ENCODE measurements at regions of chr1 and their contacts with region 1.

Region 1: DNA sequence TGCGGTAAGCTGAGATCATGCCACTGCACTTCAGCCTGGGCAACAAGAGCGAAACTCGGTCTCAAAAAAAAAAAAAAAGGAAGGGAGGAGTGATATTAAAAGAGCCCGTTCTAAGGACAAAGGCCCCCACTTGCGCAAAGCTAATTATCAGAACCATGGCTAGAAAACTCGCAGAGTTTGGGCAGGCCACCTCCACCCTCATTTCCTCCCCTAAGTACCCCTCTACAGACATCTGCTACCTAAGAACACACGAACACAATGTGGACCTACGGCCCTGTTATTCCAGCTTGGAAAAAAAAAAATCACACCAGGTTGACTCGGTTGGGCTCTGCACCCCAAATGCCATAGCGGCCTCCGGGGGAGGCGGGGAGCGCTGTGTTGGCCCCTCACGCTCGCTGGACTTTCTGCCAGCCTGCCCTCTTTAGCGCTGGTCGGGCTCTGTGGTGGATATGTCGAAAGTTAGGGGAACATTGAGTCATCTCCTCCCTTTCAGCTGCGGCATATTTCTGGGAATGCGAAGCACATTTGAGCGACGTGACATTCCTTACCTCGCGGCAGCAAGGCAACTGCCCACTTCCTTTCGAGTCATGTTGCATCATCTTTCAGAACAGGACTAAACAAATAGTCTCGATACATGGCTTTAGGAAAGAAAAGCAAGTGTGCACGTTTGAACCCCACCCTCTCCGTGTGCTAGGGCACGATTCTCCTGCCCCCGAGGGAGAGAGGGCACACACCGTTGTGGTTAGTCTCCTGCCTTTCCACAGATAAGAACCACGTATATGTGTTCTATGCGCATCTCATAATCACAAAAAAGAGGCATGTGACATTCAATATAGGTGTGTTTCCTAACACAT is 106.1 kb upstream of the SLC45A1 start:
- DNase-seq: peak; percentile 98
- ATAC-seq: peak; percentile 83
- H3K4me3 ChIP-seq: peak overlapping the region; percentile 22; the same call in 1 of the 2 replicates
- H3K27ac ChIP-seq: peak overlapping the region; percentile 98
- H3K4me1 ChIP-seq: peaks cover 33% of the 10 kb centered on the region
- H3K27me3 ChIP-seq: no peaks in the 10 kb centered on the region
- CTCF ChIP-seq: no peak

Region 2: GRCh38 chr1:8121261-8122170 is 90.3 kb before region 1 on chr1:
- CTCF ChIA-PET with region 1: no interaction called
- POLR2A ChIA-PET with region 1: no interaction called
- intact Hi-C with region 1: no loop called
- DNase-seq: peak; percentile 45
- ATAC-seq: no peak
- H3K4me3 ChIP-seq: no peak overlapping the region
- H3K27ac ChIP-seq: peak overlapping the region; percentile 54
- H3K4me1 ChIP-seq: peaks cover 14% of the 10 kb centered on the region
- H3K27me3 ChIP-seq: no peaks in the 10 kb centered on the region
- CTCF ChIP-seq: no peak

Region 3: DNA sequence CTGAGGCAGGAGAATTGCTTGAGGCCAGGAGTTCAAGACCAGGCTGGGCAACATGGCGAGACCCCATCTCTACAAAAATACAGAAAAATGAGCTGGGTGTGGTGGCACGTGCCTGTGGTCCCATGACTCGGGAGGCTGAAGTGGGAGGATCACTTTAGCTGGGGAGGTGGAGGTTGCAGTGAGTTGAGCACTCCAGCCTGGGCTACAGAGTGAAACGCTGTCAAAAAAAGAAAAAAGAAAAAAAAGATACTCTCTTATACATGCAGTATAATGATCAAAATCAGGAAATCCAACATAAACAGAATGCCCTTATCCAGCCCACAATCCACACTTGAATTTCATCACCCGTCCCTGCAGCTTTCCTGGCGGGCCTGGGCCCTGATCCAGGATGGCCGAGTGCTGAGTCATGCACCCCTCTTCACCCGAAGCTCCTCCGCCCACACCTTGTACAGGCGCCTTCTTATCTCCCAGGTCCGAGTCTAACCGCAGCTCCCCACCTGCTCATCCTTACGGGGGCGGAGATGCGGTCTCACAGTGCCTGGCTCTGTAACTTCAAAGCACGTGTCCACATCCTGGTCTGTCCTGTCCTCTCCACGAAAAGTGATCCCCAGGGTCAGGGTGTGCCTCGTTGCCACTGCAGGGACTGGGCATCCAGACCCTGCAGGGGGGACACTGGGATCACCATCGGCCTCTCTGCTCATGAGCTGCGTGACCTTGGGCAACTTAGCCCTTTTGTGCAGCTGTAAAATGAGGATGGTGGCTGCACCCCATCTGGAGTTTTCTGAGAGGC is 14.1 kb before region 1 on chr1:
- CTCF ChIA-PET with region 1: no interaction called
- POLR2A ChIA-PET with region 1: interaction called, 5 read pairs
- intact Hi-C with region 1: loop called (anchors 2 kb)
- DNase-seq: peak; percentile 96
- ATAC-seq: peak; percentile 63
- H3K4me3 ChIP-seq: no peak overlapping the region
- H3K27ac ChIP-seq: peak overlapping the region; percentile 98
- H3K4me1 ChIP-seq: peaks cover 61% of the 10 kb centered on the region
- H3K27me3 ChIP-seq: no peaks in the 10 kb centered on the region
- CTCF ChIP-seq: no peak

Region 4: DNA sequence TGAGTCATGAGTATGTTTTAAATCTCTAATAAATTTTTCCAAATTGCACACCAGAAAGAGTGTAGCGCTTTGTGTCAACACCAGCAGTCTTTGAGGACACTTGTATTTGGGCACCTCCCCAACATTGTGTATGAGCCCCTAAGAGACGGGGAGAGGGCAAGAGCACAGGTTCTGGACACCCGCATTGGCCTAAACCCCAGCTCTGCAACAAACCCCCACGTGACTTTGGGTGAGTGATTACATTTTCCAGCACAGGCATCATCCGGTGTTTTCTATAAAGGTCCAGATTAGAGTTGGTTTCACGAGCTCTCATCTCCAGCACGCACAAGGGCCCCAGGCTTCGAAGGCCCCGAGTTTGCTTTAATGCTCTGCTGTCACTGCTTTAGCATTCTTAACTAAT is 39.8 kb after region 1 on chr1:
- CTCF ChIA-PET with region 1: no interaction called
- POLR2A ChIA-PET with region 1: no interaction called
- intact Hi-C with region 1: no loop called
- DNase-seq: no peak
- ATAC-seq: no peak
- H3K4me3 ChIP-seq: no peak overlapping the region
- H3K27ac ChIP-seq: no peak overlapping the region
- H3K4me1 ChIP-seq: no peaks in the 10 kb centered on the region
- H3K27me3 ChIP-seq: no peaks in the 10 kb centered on the region
- CTCF ChIP-seq: no peak

Region 5: DNA sequence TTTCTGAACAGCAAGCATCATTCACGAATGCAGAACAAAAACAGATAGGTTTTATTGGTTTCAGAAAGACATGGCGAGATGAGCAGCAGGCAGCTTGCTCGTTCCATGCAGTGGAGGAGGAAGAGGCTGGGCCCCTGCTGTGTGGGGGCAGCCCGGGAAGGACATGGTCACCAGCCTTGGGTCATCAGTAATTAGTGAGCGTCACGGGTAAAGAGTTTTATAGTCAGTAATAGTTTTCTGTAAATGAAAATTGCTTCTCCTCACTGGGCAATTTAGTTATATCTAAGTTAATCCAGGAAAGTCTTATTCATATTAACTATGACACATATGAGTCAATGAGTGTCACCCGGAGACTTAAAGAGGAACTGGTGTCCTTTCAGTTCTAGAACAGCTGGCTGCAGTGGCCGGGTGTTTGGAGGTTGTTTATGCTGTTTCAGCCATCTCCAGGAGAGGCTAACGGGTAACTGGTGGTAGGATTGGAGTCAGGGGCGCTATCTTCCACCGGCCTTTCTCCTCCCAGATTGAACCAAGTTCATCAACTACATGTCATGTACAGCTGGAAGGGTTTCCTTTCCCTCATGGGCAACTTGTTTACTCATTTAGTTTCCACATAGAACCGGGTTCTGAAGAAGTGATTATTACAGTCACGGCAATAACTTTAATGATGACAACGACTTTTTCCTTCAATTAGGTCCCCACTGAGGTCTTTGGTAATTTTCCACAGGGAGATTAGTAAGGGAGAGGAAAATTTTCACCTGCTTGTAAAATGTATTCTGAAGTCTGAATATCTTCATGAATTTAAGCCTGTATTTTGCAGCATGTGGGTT is 71.5 kb after region 1 on chr1:
- CTCF ChIA-PET with region 1: no interaction called
- POLR2A ChIA-PET with region 1: no interaction called
- intact Hi-C with region 1: no loop called
- DNase-seq: peak; percentile 38
- ATAC-seq: peak; percentile 60
- H3K4me3 ChIP-seq: no peak overlapping the region
- H3K27ac ChIP-seq: peak overlapping the region; percentile 40; the same call in 1 of the 2 replicates
- H3K4me1 ChIP-seq: peaks cover 27% of the 10 kb centered on the region
- H3K27me3 ChIP-seq: no peaks in the 10 kb centered on the region
- CTCF ChIP-seq: no peak

Region 6: DNA sequence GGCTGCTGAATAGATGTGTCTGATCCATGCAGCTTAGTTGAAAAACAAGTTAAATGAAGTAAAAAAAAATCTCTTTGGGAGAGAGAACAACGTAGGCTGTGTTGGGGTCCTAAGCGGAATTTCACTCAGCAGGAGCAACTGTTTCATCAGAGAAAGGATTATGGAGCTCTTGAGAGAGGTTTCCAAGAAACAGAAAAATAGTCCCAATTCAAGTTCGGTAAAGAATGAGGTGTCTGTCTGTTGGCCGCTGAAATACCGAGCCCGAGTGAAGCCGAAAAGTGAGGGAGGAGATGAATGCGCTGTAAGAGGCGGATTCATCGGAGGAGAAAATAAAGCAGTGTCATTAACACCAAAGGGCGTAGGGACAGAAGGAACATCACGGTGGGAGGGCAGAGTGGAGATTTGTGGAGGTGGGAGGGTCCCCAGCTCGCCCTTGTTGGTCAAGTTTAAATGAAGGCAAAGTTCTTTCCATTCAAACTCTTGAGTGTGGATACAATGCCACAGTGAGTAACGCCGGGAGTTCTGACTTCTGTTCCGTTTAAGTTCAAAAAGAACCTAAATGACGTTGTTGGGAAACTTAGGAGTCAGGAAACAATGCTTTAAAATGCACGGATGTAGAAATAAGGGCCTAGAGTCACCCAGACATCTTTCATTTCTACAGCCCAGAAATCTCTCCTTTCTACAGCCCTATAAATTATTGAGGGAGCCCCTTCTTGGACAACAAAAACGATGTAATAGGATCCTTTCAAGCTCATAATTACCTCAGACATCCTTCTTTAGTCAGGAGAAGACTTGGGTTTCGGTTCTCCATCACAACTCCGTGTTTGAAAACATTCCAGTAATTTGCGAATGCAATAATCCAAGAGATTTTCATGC is 90.5 kb after region 1 on chr1:
- CTCF ChIA-PET with region 1: no interaction called
- POLR2A ChIA-PET with region 1: no interaction called
- intact Hi-C with region 1: no loop called
- DNase-seq: no peak
- ATAC-seq: no peak
- H3K4me3 ChIP-seq: no peak overlapping the region
- H3K27ac ChIP-seq: no peak overlapping the region
- H3K4me1 ChIP-seq: no peaks in the 10 kb centered on the region
- H3K27me3 ChIP-seq: no peaks in the 10 kb centered on the region
- CTCF ChIP-seq: no peak

Region 7: GRCh38 chr1:8314346-8315280 is 102.8 kb after region 1 on chr1:
- CTCF ChIA-PET with region 1: no interaction called
- POLR2A ChIA-PET with region 1: no interaction called
- intact Hi-C with region 1: loop called (anchors 2 kb)
- DNase-seq: peak; percentile 90
- ATAC-seq: peak; percentile 79
- H3K4me3 ChIP-seq: no peak overlapping the region
- H3K27ac ChIP-seq: peak overlapping the region; percentile 62
- H3K4me1 ChIP-seq: peaks cover 29% of the 10 kb centered on the region
- H3K27me3 ChIP-seq: no peaks in the 10 kb centered on the region
- CTCF ChIP-seq: peak; percentile 91

Measured in PC-3 (cell line).